Calu3 (cell line): ENCODE measurements at regions of chr6 and their contacts with region 1.

Region 1: GRCh38 chr6:26065952-26066380 is 21.3 kb upstream of the HFE start:
- DNase-seq: peak; percentile 86
- H3K4me3 Mint-ChIP-seq: peak overlapping the region; percentile 32
- H3K27ac Mint-ChIP-seq: peak overlapping the region; percentile 43
- H3K4me1 Mint-ChIP-seq: peaks cover 21% of the 10 kb centered on the region
- H3K27me3 Mint-ChIP-seq: no peaks in the 10 kb centered on the region
- CTCF ChIP-seq: peak; percentile 73

Region 2: GRCh38 chr6:25913741-25914140 is 152.2 kb before region 1 on chr6:
- CTCF ChIA-PET with region 1: no interaction called
- intact Hi-C with region 1: no loop called
- DNase-seq: no peak
- H3K4me3 Mint-ChIP-seq: no peak overlapping the region
- H3K27ac Mint-ChIP-seq: peak overlapping the region; percentile 2
- H3K4me1 Mint-ChIP-seq: peaks cover 30% of the 10 kb centered on the region
- H3K27me3 Mint-ChIP-seq: no peaks in the 10 kb centered on the region
- CTCF ChIP-seq: no peak

Region 3: GRCh38 chr6:26097268-26097875 is 31.4 kb after region 1 on chr6:
- CTCF ChIA-PET with region 1: interaction called, 3 read pairs
- intact Hi-C with region 1: loop called (anchors 1 kb)
- DNase-seq: peak; percentile 79
- H3K4me3 Mint-ChIP-seq: no peak overlapping the region
- H3K27ac Mint-ChIP-seq: peak overlapping the region; percentile 26
- H3K4me1 Mint-ChIP-seq: peaks cover 17% of the 10 kb centered on the region
- H3K27me3 Mint-ChIP-seq: no peaks in the 10 kb centered on the region
- CTCF ChIP-seq: peak; percentile 79